Mammary epithelial cell (primary cell): ENCODE measurements at regions of chrX and their contacts with region 1.

Region 1: DNA sequence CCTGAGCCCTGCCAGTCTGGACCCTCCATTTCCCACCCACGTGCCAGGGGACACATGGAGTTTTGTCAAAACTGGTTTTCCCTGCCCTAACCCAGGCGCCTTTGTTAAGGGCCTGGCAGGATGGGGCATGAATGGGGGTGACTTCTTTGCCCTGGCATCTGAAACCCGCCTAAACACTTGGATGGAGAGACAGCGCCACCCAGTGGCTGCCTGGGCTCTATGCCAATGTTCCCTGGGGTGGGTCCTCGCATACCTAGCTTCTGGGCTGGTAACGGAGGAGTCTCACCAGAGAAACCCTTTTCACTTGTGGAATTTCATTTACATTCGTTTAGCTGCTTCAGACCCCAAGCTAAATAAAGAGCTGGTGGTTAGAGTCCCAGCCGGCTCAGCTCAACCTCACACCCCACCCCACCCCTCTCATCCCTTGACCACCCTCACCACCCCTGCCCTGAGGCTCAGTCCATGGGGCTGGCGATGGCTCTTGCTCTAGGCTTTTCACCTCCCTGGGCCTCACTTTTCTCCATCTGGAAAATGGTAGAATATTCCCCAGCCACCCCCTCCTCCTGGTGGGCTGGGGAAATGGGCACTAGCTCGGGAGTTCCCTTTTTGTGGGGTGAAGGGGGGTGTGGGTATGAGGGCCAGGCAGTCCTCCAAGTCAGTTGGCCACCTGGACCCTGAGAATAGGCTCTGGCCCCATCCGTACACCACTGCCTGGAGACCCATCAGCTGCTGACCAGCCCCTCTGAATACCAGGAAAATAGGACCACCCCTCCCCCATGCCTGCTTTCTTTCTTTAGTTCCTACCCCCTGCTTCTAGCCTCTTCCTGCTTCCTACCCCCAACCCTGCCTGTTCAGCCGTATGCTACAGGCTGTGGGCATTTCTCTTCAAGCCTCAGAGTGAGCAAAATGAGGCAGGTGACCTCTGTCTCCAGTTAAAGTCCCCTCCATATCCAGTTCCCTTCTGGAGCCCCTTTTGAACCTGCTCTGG is 57.1 kb upstream of the PJA1 start:
- DNase-seq: peak; percentile 64
- H3K4me3 ChIP-seq: no peak overlapping the region
- H3K27ac ChIP-seq: peak overlapping the region; percentile 24
- H3K4me1 ChIP-seq: no peaks in the 10 kb centered on the region
- H3K27me3 ChIP-seq: no peaks in the 10 kb centered on the region
- CTCF ChIP-seq: peak; percentile 63 to 89

Region 2: GRCh38 chrX:68732906-68733493 is 489.4 kb before region 1 on chrX:
- CTCF ChIA-PET with region 1: no interaction called
- dilution Hi-C with region 1: no loop called
- in situ Hi-C with region 1: loop called in 1 of 2 experiments (anchors 10 kb)
- intact Hi-C with region 1: loop called (anchors 1 kb)
- DNase-seq: peak; percentile 34
- H3K4me3 ChIP-seq: no peak overlapping the region
- H3K27ac ChIP-seq: no peak overlapping the region
- H3K4me1 ChIP-seq: no peaks in the 10 kb centered on the region
- H3K27me3 ChIP-seq: peaks cover 3% of the 10 kb centered on the region
- CTCF ChIP-seq: peak; percentile 78 to 84

Region 3: DNA sequence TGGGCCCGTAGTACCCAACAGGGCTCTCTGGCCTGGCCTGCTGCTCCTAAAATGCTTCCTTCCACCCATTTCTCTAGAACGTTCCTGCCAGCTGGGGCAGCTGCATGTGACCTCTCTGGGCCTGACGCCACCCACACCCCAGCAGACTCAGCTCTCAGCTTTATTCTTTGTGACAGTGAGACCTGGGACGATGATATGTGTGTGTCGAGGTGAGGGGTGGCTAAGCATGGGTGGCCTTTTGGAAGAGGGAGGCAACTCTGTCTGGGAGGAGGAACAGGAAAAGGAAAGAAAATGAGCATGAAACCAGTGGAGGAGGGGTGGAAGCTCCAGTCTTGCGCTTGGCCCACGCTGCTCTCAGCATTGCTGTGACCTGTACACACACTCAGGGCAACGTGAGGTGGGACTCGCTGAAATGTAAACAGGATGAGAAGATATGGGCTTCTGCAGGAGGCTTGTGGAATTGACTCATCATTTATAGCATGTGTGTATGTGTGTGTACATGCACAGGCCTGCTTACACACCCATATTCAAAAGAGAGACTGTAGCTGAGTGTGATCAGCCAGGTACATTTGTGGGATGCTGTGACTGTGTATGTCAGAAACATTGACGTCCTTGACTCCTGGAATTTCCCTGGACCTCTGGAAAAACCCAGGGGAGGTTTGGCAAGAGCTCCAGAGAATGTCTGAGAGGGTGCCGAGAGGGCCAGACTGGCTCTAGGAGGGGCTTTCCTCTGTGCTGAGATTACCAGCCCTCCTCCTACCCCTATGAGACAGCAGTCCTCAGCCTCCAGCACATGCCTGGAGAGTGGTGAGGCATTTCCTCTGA is 195.0 kb before region 1 on chrX:
- CTCF ChIA-PET with region 1: no interaction called
- dilution Hi-C with region 1: no loop called
- in situ Hi-C with region 1: no loop called
- intact Hi-C with region 1: loop called (anchors 1 kb)
- DNase-seq: peak; percentile 97
- H3K4me3 ChIP-seq: no peak overlapping the region
- H3K27ac ChIP-seq: peak overlapping the region; percentile 96
- H3K4me1 ChIP-seq: peaks cover 53% of the 10 kb centered on the region
- H3K27me3 ChIP-seq: no peaks in the 10 kb centered on the region
- CTCF ChIP-seq: no peak

Region 4: DNA sequence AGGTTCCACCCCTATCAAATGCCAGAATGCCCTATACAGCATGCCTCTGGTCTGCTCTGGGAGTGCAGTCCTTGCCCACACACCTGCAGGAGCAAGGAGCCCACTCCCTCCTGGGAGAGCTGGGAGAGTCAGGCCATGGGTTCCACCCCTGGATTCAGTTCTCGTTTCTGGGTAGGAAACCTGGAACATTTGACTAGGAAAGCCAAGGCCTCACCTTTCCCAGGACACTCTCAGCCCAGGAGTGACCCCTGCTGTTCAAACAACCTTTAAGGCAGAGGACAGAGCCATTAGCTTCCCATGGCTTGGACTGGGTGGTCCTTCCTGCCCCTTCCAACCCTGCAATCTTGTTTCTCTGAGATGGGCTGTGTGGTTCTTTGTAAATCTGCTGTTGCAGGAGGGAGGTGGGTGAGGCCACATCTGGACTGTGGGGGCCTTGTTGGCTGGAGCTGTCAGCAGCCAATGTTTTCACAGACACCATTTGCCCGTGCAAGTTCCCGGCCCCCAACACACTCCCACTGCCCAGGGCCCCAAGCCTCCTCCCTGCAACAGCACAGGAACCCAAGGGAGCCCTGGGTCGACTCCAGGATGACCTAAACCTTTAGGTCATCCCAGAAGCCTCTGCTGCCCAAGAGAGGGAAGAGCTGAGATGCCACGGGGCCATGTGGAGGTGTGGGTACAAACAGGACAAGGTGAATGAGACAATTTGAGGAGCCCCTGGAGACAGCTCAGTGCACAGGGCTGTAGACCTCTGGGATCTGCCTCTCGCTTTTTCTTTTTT is 161.6 kb before region 1 on chrX:
- CTCF ChIA-PET with region 1: no interaction called
- dilution Hi-C with region 1: no loop called
- in situ Hi-C with region 1: no loop called
- intact Hi-C with region 1: loop called (anchors 1 kb)
- DNase-seq: peak; percentile 36
- H3K4me3 ChIP-seq: no peak overlapping the region
- H3K27ac ChIP-seq: no peak overlapping the region
- H3K4me1 ChIP-seq: no peaks in the 10 kb centered on the region
- H3K27me3 ChIP-seq: no peaks in the 10 kb centered on the region
- CTCF ChIP-seq: peak in 1 of 2 donors; percentile 48

Region 5: GRCh38 chrX:69133921-69134542 is 88.4 kb before region 1 on chrX:
- CTCF ChIA-PET with region 1: no interaction called
- dilution Hi-C with region 1: no loop called
- in situ Hi-C with region 1: no loop called
- intact Hi-C with region 1: loop called (anchors 1 kb)
- DNase-seq: peak; percentile 61
- H3K4me3 ChIP-seq: no peak overlapping the region
- H3K27ac ChIP-seq: no peak overlapping the region
- H3K4me1 ChIP-seq: no peaks in the 10 kb centered on the region
- H3K27me3 ChIP-seq: no peaks in the 10 kb centered on the region
- CTCF ChIP-seq: peak; percentile 58 to 71

Region 6: GRCh38 chrX:69285881-69286564 is 63.6 kb after region 1 on chrX:
- CTCF ChIA-PET with region 1: no interaction called
- dilution Hi-C with region 1: no loop called
- in situ Hi-C with region 1: no loop called
- intact Hi-C with region 1: loop called (anchors 1 kb)
- DNase-seq: peak; percentile 9
- H3K4me3 ChIP-seq: peak overlapping the region in 1 of 3 experiments; percentile 43
- H3K27ac ChIP-seq: no peak overlapping the region
- H3K4me1 ChIP-seq: peaks cover 6% of the 10 kb centered on the region
- H3K27me3 ChIP-seq: no peaks in the 10 kb centered on the region
- CTCF ChIP-seq: peak; percentile 45 to 82